Ascending aorta (tissue), 2 donors: ENCODE measurements at regions of chr2 and their contacts with region 1.

Region 1: GRCh38 chr2:10408649-10409579 is 39.2 kb downstream of the ODC1 start:
- DNase-seq: peak in 1 of 2 donors; percentile 86
- H3K4me3 ChIP-seq: no peak overlapping the region
- H3K27ac ChIP-seq: peak overlapping the region in 1 of 2 donors; percentile 52
- H3K4me1 ChIP-seq: peaks cover 24 to 43% of the 10 kb centered on the region in 2 donors
- H3K27me3 ChIP-seq: no peaks in the 10 kb centered on the region
- CTCF ChIP-seq: peak; percentile 91 to 94 (median 91)

Region 2: DNA sequence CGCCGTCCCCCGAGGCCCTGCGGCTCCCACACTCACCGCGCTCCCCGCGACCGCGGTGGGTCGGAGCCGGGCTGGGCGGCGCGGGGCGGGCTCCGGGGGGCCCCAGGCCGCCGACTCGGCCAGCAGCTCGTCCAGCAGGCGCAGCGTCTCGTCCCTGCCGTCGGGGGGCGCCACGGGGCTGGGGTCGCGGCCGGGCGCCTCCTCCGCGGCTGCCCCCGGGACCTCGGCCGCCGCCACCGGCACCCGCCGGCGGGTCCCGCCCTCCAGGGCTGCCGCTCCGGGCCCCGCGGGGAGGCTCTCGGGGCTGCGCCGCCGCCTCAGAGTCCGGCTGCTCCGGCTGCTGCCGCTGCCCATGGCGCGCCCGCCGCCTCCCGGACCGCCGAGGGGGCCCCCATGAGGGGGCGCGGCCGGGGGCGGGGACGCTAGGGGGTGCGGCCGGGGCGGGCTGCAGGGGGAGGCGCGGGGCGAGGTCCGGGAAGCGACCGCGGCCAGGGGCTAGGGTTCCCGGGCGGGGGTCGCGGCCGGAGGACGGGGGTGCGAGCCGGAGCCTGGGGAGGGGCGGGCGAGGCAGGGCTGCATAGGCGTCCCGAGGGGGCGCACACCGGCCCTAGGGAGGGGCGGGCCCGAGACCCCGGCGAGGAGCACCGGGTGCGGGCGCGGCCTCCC is 328.9 kb before region 1 on chr2 and contains the start of gene CYS1:
- intact Hi-C with region 1: loop called (anchors 1 kb)
- DNase-seq: no peak
- H3K4me3 ChIP-seq: peak within 1 kb of the TSS; percentile 84 to 95
- H3K27ac ChIP-seq: peak within 1 kb of the TSS; percentile 85 to 98
- H3K4me1 ChIP-seq: peaks cover 0 to 10% of the 10 kb centered on the region in 2 donors
- H3K27me3 ChIP-seq: no peaks in the 10 kb centered on the region
- CTCF ChIP-seq: peak in 1 of 3 experiments; percentile 57
- total RNA-seq, gene CYS1: 13.8 TPM

Region 3: DNA sequence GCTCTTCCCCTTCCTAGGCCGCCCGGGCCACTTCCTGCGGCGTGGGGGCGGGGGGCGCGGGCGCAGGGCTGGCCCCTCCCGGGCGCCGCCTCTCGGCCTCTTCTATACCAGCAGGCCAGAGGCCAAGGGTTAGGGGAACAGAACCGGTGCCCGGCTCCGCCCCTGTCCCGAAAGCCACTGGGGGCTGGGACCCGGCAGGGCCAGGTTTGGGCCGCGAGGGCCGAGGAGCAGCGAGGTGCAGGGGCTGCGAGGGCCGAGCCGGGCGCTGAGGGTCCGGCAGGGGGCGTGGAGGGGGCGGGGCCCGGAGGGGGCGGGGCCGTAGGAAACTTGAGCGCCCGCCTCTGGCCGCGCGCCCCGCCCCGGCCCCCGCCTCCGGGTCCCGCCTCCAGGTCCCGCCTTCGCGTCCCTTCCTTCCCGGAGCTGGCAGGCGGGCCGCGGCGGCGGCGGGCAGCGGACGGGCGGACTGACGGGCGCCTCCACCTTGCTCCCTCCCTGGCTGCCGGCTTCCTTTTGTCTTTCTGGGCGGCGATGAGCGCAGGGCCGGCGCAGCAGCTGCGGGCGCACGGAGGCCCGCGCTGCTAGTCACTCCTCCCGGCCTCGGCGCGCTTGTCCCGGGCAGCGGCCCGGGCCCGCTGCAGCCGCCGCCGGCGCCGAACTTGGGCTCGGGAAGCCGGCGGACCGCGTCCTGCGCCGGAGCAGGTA is 106.3 kb before region 1 on chr2 and contains the start of gene HPCAL1:
- intact Hi-C with region 1: loop called (anchors 1 kb)
- DNase-seq: peak; percentile 30 to 90
- H3K4me3 ChIP-seq: peak within 1 kb of the TSS; percentile 68 to 92
- H3K27ac ChIP-seq: peak within 1 kb of the TSS; percentile 78 to 84
- H3K4me1 ChIP-seq: peaks cover 0 to 6% of the 10 kb centered on the region in 2 donors
- H3K27me3 ChIP-seq: no peaks in the 10 kb centered on the region
- CTCF ChIP-seq: peak; percentile 50 to 70 (median 59)
- total RNA-seq, gene HPCAL1: 401 TPM

Region 4: GRCh38 chr2:10467401-10467800 is 58.5 kb after region 1 on chr2:
- intact Hi-C with region 1: no loop called
- DNase-seq: no peak
- H3K4me3 ChIP-seq: no peak overlapping the region
- H3K27ac ChIP-seq: no peak overlapping the region
- H3K4me1 ChIP-seq: no peaks in the 10 kb centered on the region
- H3K27me3 ChIP-seq: no peaks in the 10 kb centered on the region
- CTCF ChIP-seq: no peak

Region 5: GRCh38 chr2:10566018-10566417 is 157.1 kb after region 1 on chr2:
- intact Hi-C with region 1: no loop called
- DNase-seq: no peak
- H3K4me3 ChIP-seq: no peak overlapping the region
- H3K27ac ChIP-seq: no peak overlapping the region
- H3K4me1 ChIP-seq: no peaks in the 10 kb centered on the region
- H3K27me3 ChIP-seq: no peaks in the 10 kb centered on the region
- CTCF ChIP-seq: no peak

Region 6: GRCh38 chr2:10654069-10654468 is 245.2 kb after region 1 on chr2:
- intact Hi-C with region 1: no loop called
- DNase-seq: no peak
- H3K4me3 ChIP-seq: no peak overlapping the region
- H3K27ac ChIP-seq: no peak overlapping the region
- H3K4me1 ChIP-seq: no peaks in the 10 kb centered on the region
- H3K27me3 ChIP-seq: no peaks in the 10 kb centered on the region
- CTCF ChIP-seq: no peak